AG04450 (cell line): ENCODE measurements at regions of chr2 and their contacts with region 1.

Region 1: DNA sequence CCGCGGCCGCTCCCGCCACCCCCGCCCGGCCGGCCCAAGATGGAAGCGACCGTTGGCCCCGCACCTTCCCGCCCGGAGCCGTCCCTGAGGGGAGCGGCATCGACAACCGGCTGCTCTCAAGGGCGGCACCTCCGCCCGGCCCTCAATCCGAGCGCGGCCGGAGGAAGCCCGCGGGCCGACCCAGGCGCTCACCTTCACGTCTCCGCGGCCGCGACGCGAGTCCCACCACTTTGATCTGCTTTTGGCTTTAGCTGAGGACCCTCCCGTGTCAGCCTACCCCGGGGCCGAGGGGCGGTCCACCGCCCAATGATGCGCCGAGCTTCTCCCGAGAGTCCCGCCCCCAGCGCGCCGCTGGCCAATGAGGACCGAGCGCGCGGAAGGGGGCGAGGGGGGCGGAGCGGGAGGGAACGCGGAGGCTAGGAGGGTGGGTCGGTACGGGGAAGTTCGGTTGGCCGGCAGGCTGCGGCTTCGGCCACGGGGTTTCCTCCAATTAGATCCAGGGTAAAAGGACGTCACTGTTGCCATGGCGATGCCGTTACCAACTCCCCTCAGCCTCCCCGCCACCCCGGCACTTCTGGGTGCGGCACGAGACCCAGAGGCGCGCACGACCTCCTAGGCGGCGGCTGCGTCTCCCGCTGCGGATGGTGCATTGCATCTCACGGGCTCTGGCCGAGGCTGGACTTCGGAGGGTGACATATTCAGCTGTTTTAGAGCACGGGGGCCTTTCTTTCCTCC is at the start of gene YWHAQ:
- DNase-seq: peak; percentile 98
- H3K4me3 ChIP-seq: peak within 1 kb of the TSS; percentile 96
- H3K27ac ChIP-seq: peak within 1 kb of the TSS; percentile 81
- H3K27me3 ChIP-seq: no peaks in the 10 kb centered on the region
- CTCF ChIP-seq: no peak
- polyA plus RNA-seq, gene YWHAQ: 509 and 624 TPM in 2 replicates

Region 2: DNA sequence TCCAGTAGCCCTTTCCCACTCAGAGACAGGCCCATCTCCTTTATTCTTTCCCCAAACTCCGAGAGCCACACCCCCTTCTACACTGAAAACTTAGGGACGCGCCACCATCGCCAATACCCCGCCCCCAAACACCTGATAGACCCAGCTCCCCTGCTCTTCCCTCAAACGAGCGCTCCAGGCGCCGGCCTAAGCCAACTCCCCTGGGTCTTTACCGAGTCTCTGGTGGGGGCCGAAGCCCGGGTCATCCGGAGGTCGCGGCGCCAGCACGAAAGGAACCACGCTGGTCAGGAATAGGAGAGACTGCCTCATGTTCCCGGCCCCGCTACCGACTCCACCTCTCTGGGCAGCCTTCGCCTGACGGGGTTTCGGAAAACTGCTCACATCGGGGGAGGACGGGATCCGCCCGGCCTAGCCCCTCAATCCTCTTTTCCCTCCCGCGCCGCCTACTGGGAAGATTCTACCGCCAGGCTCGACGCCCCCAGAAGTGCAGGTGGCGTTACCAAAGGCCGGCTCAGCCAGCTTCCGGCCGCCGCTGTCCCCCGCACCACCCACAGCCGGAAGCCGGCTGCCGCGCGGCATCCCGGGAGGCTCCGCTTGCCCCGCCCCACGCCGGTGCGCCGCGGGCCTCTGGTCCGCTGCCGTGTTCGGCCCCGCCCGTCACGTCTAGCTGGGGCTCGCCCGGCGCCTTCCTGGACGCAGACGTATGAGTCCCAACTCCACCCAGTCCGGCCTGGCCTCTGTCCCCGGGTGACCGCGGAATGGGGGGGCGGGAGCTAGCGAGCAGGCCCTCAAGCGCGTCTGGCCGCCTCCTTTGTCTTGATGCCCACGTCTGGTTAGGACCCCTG is 75.4 kb before region 1 on chr2 and contains the start of gene ADAM17:
- CTCF ChIA-PET with region 1: interaction called, 3 read pairs
- POLR2A ChIA-PET with region 1: interaction called, 29 read pairs
- DNase-seq: peak; percentile 85
- H3K4me3 ChIP-seq: peak within 1 kb of the TSS; percentile 98
- H3K27ac ChIP-seq: peak within 1 kb of the TSS; percentile 97
- H3K27me3 ChIP-seq: no peaks in the 10 kb centered on the region
- CTCF ChIP-seq: peak; percentile 65
- polyA plus RNA-seq, gene ADAM17: 12.6 and 14.0 TPM in 2 replicates

Region 3: DNA sequence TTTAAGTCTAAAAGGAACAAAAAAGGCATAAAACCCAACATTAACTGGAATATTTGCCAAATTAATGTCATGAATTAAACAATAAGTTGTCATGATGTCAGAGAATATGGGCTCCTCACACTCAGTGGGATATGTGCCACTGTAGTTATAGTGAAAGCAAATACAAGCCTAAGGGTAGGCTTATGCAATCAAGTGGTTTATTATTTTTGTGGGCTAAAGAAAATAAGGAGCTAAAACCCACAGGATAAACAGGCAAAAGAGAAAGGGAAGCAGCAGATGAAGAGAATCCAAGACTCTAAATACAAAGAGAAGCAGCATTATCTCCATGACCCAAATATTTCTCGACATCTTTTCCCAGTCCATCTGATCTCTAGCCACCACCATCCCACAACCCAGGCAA is 17.6 kb before region 1 on chr2:
- CTCF ChIA-PET with region 1: no interaction called
- POLR2A ChIA-PET with region 1: interaction called, 17 read pairs
- DNase-seq: no peak
- H3K4me3 ChIP-seq: no peak overlapping the region
- H3K27ac ChIP-seq: no peak overlapping the region
- H3K27me3 ChIP-seq: no peaks in the 10 kb centered on the region
- CTCF ChIP-seq: no peak

Region 4: GRCh38 chr2:9656270-9656766 is 25.4 kb after region 1 on chr2:
- CTCF ChIA-PET with region 1: no interaction called
- POLR2A ChIA-PET with region 1: interaction called, 12 read pairs
- DNase-seq: peak; percentile 87
- H3K4me3 ChIP-seq: no peak overlapping the region
- H3K27ac ChIP-seq: peak overlapping the region; percentile 96
- H3K27me3 ChIP-seq: no peaks in the 10 kb centered on the region
- CTCF ChIP-seq: no peak

Region 5: GRCh38 chr2:9703085-9703641 is 72.2 kb after region 1 on chr2:
- CTCF ChIA-PET with region 1: no interaction called
- POLR2A ChIA-PET with region 1: interaction called, 14 read pairs
- DNase-seq: peak; percentile 36
- H3K4me3 ChIP-seq: no peak overlapping the region
- H3K27ac ChIP-seq: peak overlapping the region; percentile 52
- H3K27me3 ChIP-seq: no peaks in the 10 kb centered on the region
- CTCF ChIP-seq: no peak

Region 6: GRCh38 chr2:9753276-9753600 is 122.3 kb after region 1 on chr2:
- CTCF ChIA-PET with region 1: interaction called, 3 read pairs
- POLR2A ChIA-PET with region 1: interaction called, 10 read pairs
- DNase-seq: peak; percentile 58
- H3K4me3 ChIP-seq: peak overlapping the region; percentile 42; the same call in 1 of the 2 replicates
- H3K27ac ChIP-seq: peak overlapping the region; percentile 85
- H3K27me3 ChIP-seq: no peaks in the 10 kb centered on the region
- CTCF ChIP-seq: no peak

Region 7: DNA sequence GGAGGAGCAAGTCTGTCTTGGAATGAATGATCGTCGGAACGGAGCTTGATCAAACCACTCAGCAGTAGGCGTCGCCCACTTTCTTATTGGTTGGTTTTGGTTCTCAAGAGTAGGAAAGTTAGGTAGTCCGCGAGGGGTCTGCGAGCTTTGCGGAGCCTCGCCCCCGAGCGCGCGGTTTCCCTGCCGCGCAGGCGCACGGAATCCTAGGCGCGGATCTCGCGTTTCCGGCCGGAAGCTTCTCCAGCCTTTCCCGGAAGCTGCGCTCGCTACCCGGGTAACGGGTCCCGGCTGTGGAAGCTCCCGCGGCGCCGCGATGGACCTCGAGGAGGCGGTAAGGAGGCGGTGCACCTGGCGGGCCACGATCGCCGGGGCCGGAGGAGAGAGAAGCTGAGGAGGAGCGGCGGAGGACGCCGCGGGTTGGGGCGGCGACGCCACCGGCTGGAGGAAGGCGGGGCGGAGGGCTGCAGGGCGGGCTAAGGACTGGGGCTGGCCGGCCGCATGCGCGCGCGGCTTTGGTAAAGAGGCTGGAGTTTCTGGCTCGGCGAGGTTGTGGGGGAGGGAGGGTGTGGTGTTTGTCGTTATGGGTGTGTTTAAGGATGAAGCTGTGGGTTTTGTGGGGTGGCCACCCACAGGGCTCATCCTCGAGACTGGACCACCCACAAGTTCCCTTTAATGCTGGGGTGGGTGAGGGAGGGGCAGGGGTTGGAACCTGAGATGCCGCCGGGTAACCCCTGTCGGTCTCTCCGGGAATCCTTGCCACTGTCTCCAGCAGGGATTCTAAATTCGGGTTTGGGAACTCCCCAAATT is 212.5 kb after region 1 on chr2 and contains the start of gene TAF1B:
- CTCF ChIA-PET with region 1: no interaction called
- POLR2A ChIA-PET with region 1: interaction called, 11 read pairs
- DNase-seq: peak; percentile 75
- H3K4me3 ChIP-seq: peak within 1 kb of the TSS; percentile 78
- H3K27ac ChIP-seq: peak within 1 kb of the TSS; percentile 88
- H3K27me3 ChIP-seq: no peaks in the 10 kb centered on the region
- CTCF ChIP-seq: peak; percentile 28; the same call in 1 of the 2 replicates
- polyA plus RNA-seq, gene TAF1B: 17.2 and 25.8 TPM in 2 replicates